B cell (primary cell): ENCODE measurements at regions of chr5 and their contacts with region 1.

Region 1: DNA sequence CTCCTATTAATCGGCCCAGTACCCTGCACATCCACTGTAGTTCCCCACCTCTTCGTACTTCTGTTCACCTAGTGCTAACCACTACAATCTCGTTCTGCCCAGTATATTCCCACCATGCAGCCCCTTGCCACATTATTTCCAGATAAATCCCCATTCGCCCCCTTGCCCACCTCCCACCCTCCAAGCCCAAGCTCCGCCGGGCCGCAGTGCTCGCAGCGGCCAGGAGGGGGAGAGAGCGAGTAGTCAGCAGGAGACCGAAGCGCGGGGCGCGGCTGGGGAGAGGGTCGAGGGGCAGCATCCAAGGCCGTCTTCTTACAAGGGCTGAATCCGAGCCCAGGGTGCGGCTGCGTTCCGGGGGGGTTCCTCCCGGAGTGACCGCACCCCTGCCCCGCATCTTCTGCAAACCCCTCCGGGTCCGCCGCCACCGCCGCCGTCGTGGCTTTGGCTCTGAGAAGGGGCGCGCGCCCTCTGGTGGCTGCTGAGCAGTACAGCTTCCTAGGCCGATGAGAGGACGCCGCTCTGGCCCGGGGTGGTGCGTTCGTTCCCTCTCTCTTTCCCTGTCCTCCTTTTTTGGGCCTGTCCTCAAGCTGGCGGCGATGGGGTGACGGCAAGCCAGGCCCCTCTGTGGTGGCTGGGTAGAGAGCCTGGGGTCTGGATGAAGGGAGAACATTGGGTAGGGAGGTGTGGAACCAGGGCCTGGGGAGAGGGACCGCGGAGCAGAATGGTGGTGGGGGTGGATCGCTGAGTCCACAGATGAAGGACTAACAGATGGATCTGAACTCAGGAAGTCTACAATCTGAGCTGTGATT is 30.0 kb upstream of the PSD2 start:
- DNase-seq: peak; percentile 93
- ATAC-seq: peak; percentile 79
- H3K4me3 ChIP-seq: peak overlapping the region; percentile 17 to 66 (median 58)
- H3K4me3 Mint-ChIP-seq: peak overlapping the region; percentile 86
- H3K27ac ChIP-seq: no peak overlapping the region
- H3K27ac Mint-ChIP-seq: peak overlapping the region; percentile 82
- H3K4me1 ChIP-seq: peaks cover 24 to 26% of the 10 kb centered on the region in 2 donors
- H3K4me1 Mint-ChIP-seq: peaks cover 31% of the 10 kb centered on the region
- H3K27me3 ChIP-seq: peaks cover 0 to 14% (median 4%) of the 10 kb centered on the region in 4 experiments
- H3K27me3 Mint-ChIP-seq: peaks cover 7% of the 10 kb centered on the region
- CTCF ChIP-seq: peak; percentile 100

Region 2: DNA sequence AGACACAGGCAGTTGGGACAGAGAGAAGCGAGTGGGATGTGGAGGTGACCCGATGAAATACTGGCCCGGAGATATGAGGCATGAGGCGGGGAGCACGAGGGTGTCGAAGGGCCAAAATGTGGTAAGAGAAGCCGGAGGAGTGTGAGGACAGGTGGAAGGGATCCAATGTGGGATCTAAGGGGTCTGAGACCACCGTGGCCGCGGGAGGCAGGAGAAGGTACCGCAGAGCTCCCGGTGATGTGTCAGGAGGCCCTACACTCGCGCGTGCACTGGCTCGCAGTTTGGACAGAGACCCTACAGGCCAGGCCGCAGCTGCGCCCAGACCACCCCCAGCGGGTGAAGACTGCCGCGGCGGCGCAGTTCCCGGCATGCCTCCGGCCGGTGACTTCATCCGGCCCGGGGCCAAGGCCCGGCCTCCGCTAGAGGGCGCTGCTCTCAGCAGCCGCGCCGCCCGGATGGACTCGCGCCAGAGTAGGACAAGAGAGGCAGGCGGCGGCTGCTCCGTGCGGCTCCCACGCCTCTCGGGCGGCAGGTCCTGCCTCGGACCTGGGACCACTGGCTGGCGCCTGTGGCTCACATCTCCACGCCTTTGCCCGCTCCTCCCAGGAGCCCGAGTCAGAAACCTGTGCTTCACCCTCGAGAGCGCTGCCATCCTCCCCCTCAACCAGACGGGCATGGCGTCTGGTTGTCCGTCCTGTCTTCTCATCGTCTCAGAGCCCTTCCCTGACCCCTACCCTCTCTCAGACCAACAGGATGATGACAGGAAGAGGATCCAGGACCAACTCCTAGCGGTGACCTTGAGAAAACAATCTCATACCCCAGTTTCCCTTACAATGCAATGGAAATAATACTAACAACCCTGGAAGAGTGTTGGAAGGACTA is 247.7 kb before region 1 on chr5:
- CTCF ChIA-PET with region 1: no interaction called
- POLR2A ChIA-PET with region 1: no interaction called
- intact Hi-C with region 1: loop called (anchors 1 kb)
- DNase-seq: peak; percentile 92
- ATAC-seq: peak; percentile 96
- H3K4me3 ChIP-seq: peak overlapping the region; percentile 41 to 68 (median 61)
- H3K4me3 Mint-ChIP-seq: peak overlapping the region; percentile 87
- H3K27ac ChIP-seq: peak overlapping the region; percentile 71 to 79
- H3K27ac Mint-ChIP-seq: peak overlapping the region; percentile 86
- H3K4me1 ChIP-seq: peaks cover 2 to 20% of the 10 kb centered on the region in 2 donors
- H3K4me1 Mint-ChIP-seq: peaks cover 23% of the 10 kb centered on the region
- H3K27me3 ChIP-seq: no peaks in the 10 kb centered on the region
- H3K27me3 Mint-ChIP-seq: no peaks in the 10 kb centered on the region
- CTCF ChIP-seq: peak; percentile 92

Region 3: GRCh38 chr5:139646912-139647505 is 118.6 kb before region 1 on chr5:
- CTCF ChIA-PET with region 1: interaction called, 15 read pairs
- POLR2A ChIA-PET with region 1: interaction called, 6 read pairs
- intact Hi-C with region 1: no loop called
- DNase-seq: peak; percentile 58
- ATAC-seq: no peak
- H3K4me3 ChIP-seq: peak overlapping the region; percentile 38 to 98 (median 95)
- H3K4me3 Mint-ChIP-seq: peak overlapping the region; percentile 88
- H3K27ac ChIP-seq: no peak overlapping the region
- H3K27ac Mint-ChIP-seq: peak overlapping the region; percentile 89
- H3K4me1 ChIP-seq: peaks cover 39 to 68% of the 10 kb centered on the region in 2 donors
- H3K4me1 Mint-ChIP-seq: peaks cover 66% of the 10 kb centered on the region
- H3K27me3 ChIP-seq: no peaks in the 10 kb centered on the region
- H3K27me3 Mint-ChIP-seq: no peaks in the 10 kb centered on the region
- CTCF ChIP-seq: no peak

Region 4: GRCh38 chr5:139660923-139661814 is 104.4 kb before region 1 on chr5:
- CTCF ChIA-PET with region 1: interaction called, 21 read pairs
- POLR2A ChIA-PET with region 1: interaction called, 10 read pairs
- intact Hi-C with region 1: no loop called
- DNase-seq: peak; percentile 65
- ATAC-seq: peak; percentile 71
- H3K4me3 ChIP-seq: peak overlapping the region in 3 of 5 experiments; percentile 4 to 16 (median 15)
- H3K4me3 Mint-ChIP-seq: peak overlapping the region; percentile 86
- H3K27ac ChIP-seq: peak overlapping the region; percentile 43 to 90
- H3K27ac Mint-ChIP-seq: peak overlapping the region; percentile 99
- H3K4me1 ChIP-seq: peaks cover 98 to 100% of the 10 kb centered on the region in 2 donors
- H3K4me1 Mint-ChIP-seq: peaks cover 92% of the 10 kb centered on the region
- H3K27me3 ChIP-seq: no peaks in the 10 kb centered on the region
- H3K27me3 Mint-ChIP-seq: no peaks in the 10 kb centered on the region
- CTCF ChIP-seq: no peak

Region 5: GRCh38 chr5:139690064-139690802 is 75.4 kb before region 1 on chr5:
- CTCF ChIA-PET with region 1: interaction called, 125 read pairs
- POLR2A ChIA-PET with region 1: interaction called, 7 read pairs
- intact Hi-C with region 1: loop called (anchors 1 kb)
- DNase-seq: peak; percentile 71
- ATAC-seq: peak; percentile 51
- H3K4me3 ChIP-seq: peak overlapping the region in 2 of 5 experiments; percentile 8 to 9
- H3K4me3 Mint-ChIP-seq: peak overlapping the region; percentile 41
- H3K27ac ChIP-seq: peak overlapping the region; percentile 28 to 47
- H3K27ac Mint-ChIP-seq: peak overlapping the region; percentile 78
- H3K4me1 ChIP-seq: peaks cover 47 to 56% of the 10 kb centered on the region in 2 donors
- H3K4me1 Mint-ChIP-seq: peaks cover 52% of the 10 kb centered on the region
- H3K27me3 ChIP-seq: no peaks in the 10 kb centered on the region
- H3K27me3 Mint-ChIP-seq: no peaks in the 10 kb centered on the region
- CTCF ChIP-seq: peak; percentile 70

Region 6: DNA sequence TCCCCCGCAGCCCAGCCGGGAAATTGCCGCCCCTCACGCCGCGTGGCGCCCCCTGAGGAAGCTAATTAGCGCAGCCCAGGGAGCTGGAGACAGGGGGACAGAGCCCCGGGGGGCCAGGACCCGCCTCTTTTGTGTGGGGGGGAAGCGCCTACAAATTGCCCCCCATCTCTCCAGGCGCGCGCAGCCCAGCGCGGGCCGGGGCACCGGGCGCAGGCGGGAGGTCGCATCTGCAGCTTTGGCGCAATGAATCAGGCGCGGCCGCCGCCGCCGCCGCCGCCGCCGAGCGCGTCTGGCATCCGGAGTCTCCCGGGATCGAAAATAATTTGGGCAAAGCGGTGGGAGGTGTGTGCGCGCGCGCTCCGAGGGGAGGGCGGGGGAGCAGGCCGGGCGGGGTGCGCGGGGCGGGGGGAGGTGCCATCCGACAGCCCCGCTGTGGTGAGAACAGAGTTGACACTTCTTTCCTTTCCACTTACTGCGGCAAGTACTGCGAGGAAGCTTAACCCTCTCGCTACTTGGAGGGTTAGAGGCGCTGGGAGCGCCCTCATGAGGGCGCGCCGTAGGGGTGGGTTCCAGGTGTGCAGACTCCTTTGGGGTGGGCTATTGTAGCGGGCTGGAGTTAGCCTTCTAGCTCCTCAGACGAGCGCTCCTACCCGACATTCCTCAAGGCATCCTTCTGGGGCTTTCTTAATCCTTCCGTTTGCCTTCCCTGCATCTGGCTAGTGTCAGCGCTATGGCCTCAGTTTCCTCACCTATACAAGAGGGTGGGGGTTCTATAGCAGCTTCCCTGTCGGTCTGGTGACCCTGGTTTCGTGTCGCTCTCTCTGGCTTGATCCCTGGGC is 54.3 kb before region 1 on chr5:
- CTCF ChIA-PET with region 1: interaction called, 44 read pairs
- POLR2A ChIA-PET with region 1: interaction called, 4 read pairs
- intact Hi-C with region 1: loop called (anchors 2 kb)
- DNase-seq: peak; percentile 77
- ATAC-seq: peak; percentile 51
- H3K4me3 ChIP-seq: peak overlapping the region; percentile 54 to 73 (median 60)
- H3K4me3 Mint-ChIP-seq: peak overlapping the region; percentile 90
- H3K27ac ChIP-seq: peak overlapping the region in 1 of 2 donors; percentile 75
- H3K27ac Mint-ChIP-seq: peak overlapping the region; percentile 81
- H3K4me1 ChIP-seq: peaks cover 27 to 37% of the 10 kb centered on the region in 2 donors
- H3K4me1 Mint-ChIP-seq: peaks cover 40% of the 10 kb centered on the region
- H3K27me3 ChIP-seq: peaks cover 0 to 5% (median 2%) of the 10 kb centered on the region in 4 experiments
- H3K27me3 Mint-ChIP-seq: no peaks in the 10 kb centered on the region
- CTCF ChIP-seq: no peak

Region 7: DNA sequence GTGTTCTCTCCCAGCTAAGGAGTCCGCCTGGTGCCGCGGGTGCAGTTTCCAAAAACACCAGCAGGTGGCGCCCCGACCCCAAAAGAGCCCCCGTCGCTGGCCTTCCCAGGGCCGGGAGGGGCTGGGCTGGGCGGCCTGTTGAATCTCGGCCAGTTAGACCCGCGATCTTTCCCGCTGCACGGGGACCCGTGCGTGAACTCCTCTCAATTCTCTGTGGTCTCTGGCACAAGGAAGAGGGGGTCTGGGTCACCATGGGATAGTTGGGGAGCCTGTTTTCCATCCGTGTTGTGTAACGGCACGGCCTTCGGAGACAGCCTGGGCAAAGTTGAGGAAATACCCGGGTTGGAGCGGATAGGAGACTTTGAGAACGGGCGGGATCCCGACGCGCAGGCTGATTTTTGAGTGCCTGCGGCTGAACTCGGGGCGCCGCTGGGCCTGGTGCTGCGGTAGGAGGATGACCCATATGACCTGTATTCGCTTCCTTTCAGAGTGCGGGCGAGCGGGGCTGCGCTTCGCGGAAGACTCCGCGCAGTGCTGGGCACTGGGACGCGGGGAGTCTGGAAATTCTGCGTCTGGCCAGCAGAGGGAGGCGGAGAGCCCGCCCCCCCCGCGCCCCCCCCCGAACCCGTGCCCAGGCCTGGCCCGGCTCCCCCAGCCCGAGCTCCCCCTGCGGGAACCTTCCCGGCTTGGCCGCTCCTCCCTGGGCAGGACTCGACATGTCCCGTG is 22.1 kb after region 1 on chr5:
- CTCF ChIA-PET with region 1: interaction called, 12 read pairs
- POLR2A ChIA-PET with region 1: no interaction called
- intact Hi-C with region 1: no loop called
- DNase-seq: peak; percentile 88
- ATAC-seq: peak; percentile 91
- H3K4me3 ChIP-seq: peak overlapping the region; percentile 43 to 70 (median 62)
- H3K4me3 Mint-ChIP-seq: peak overlapping the region; percentile 93
- H3K27ac ChIP-seq: no peak overlapping the region
- H3K27ac Mint-ChIP-seq: peak overlapping the region; percentile 37
- H3K4me1 ChIP-seq: peaks cover 3 to 13% of the 10 kb centered on the region in 2 donors
- H3K4me1 Mint-ChIP-seq: peaks cover 10% of the 10 kb centered on the region
- H3K27me3 ChIP-seq: peaks cover 0 to 15% (median 4%) of the 10 kb centered on the region in 4 experiments
- H3K27me3 Mint-ChIP-seq: peaks cover 28% of the 10 kb centered on the region
- CTCF ChIP-seq: peak; percentile 97